ENCODE measurements at regions of chr2 and their contacts with region 1.

Region 1: DNA sequence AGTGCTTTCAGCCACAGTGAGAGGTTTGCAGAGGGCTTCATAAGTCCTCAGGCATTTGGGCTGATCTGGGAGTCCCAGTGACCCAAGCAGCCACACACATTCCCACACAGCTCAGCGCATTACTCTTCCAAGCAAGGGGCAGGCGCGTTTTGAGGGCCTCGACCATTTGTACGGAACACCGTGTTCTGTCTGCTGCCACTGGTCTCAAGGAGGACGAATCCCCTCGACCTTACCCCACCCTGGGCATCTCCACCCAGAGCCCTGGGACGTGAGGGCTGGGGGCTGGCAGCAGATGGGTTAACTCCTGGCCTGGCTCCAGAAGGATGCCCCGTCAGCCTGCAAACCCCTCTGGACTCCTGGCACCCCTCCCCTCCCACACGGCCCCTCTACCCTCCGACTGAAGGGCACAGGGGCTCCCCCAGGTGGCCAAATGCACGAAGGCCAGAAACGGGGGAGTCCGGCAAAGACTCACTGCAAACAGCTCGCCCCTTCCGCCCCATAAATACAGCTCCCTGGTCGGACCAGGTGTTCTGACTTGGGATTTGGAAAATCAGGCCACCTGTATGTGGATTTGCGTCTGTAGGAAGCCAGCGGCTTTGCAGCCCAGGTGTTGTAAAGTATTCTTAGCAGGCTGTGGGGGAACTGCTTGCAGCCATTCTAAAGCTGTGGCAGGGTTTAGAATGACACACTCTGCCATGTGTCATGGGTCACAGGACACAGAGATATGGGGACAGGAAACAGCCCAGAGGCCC is 33.6 kb upstream of the PTMA start:
- DNase-seq: peak; percentile 91
- H3K4me3 Mint-ChIP-seq: peak overlapping the region; percentile 34
- H3K27ac Mint-ChIP-seq: peak overlapping the region; percentile 75
- H3K4me1 Mint-ChIP-seq: peaks cover 19% of the 10 kb centered on the region
- H3K27me3 Mint-ChIP-seq: peaks cover 2% of the 10 kb centered on the region

Region 2: GRCh38 chr2:231648587-231649174 is 26.1 kb before region 1 on chr2:
- intact Hi-C with region 1: loop called (anchors 1 kb)
- DNase-seq: peak; percentile 91
- H3K4me3 Mint-ChIP-seq: no peak overlapping the region
- H3K27ac Mint-ChIP-seq: no peak overlapping the region
- H3K4me1 Mint-ChIP-seq: peaks cover 16% of the 10 kb centered on the region
- H3K27me3 Mint-ChIP-seq: no peaks in the 10 kb centered on the region

Region 3: DNA sequence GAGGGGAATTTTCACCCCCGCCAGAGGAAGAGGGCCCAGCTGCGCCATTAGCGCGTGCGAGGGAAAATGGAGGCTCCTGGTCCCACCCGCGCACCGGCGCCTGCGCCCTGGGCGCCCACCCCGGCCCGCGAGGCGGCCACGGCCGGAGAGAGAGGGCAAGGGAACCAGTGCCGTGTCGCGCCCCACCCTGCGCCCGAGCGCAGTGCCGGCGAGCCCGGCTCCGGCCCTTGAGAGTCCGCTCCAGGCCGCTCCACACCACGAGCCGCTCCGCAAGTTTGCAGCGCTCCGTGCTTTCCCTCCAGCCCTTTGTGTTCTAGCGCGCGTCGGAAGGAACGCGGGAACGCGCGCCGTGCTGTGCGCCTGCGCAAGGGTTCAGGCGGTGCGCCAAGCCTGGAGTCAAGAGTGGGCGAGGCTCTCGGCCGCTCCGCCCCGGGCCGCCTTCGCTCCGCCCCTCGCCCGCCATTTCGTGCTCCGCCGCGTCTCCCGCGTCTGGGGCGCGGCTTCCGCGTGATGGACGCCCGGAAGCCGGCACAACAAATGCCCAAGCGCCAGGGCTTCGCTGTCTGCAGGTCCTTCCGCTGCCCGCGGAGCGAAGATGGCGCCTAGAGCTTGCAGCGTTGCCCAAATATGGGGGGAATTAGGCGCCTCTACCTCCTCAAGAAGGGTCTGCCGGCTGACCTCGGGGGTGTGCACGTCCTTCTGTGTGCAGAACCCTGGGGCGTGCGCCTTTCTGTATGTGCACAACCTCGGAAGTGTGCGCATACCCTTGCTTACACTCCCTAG is 12.5 kb before region 1 on chr2:
- intact Hi-C with region 1: loop called (anchors 1 kb)
- DNase-seq: peak; percentile 100
- H3K4me3 Mint-ChIP-seq: peak overlapping the region; percentile 70
- H3K27ac Mint-ChIP-seq: peak overlapping the region; percentile 98
- H3K4me1 Mint-ChIP-seq: peaks cover 22% of the 10 kb centered on the region
- H3K27me3 Mint-ChIP-seq: no peaks in the 10 kb centered on the region

Region 4: DNA sequence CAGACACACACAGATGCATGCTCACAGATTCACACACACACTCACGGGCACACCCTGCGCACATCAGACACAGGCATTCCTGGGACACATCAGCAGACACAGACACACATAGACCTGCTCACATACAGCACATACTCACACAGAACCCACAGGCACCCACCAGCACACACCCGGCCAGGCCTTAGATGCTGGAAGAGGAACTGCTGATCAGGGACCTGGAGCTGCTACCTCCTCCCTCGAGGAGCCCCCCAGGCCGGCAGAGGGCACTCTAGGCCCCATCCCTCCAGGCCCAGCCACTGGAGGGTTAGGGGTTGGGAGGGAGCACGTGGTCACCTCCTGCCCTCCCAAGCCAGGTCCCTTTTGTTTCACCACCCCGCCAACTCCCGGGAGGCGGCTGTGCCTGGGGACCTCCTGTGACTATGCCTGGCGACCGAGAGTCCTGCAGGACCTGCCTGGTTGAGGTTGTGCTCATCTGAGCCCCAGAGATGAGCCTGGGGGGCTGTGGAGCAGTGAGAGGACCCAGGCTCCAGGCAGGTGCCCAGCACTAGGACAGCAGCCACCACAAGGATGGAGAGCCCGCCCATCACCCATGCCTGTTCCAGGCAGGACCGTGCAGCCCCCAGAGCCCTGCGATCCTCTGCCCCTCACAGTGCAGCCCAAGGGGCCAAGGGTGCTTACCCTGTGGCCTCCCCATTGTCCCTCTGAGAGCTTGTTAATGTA is 12.5 kb after region 1 on chr2:
- intact Hi-C with region 1: no loop called
- DNase-seq: peak; percentile 87
- H3K4me3 Mint-ChIP-seq: no peak overlapping the region
- H3K27ac Mint-ChIP-seq: no peak overlapping the region
- H3K4me1 Mint-ChIP-seq: peaks cover 5% of the 10 kb centered on the region
- H3K27me3 Mint-ChIP-seq: peaks cover 8% of the 10 kb centered on the region

Region 5: GRCh38 chr2:231713730-231714430 is 39.1 kb after region 1 on chr2:
- intact Hi-C with region 1: loop called (anchors 1 kb)
- DNase-seq: peak; percentile 96
- H3K4me3 Mint-ChIP-seq: peak overlapping the region; percentile 79
- H3K27ac Mint-ChIP-seq: peak overlapping the region; percentile 95
- H3K4me1 Mint-ChIP-seq: peaks cover 22% of the 10 kb centered on the region
- H3K27me3 Mint-ChIP-seq: no peaks in the 10 kb centered on the region

Region 6: GRCh38 chr2:231786177-231786916 is 111.6 kb after region 1 on chr2 and contains the start of gene COPS7B:
- intact Hi-C with region 1: loop called (anchors 1 kb)
- DNase-seq: peak; percentile 95
- H3K4me3 Mint-ChIP-seq: peak within 1 kb of the TSS; percentile 94
- H3K27ac Mint-ChIP-seq: peak within 1 kb of the TSS; percentile 87
- H3K4me1 Mint-ChIP-seq: peaks cover 61% of the 10 kb centered on the region
- H3K27me3 Mint-ChIP-seq: no peaks in the 10 kb centered on the region
- total RNA-seq, gene COPS7B: 66.7 and 67.6 TPM in 2 replicates

Measured in activated CD4-positive, alpha-beta T cell treated with anti-CD3 and anti-CD28 coated beads, Interleukin-2, amount 10 ng/mL, durations not matched to agents 24 days and 14 days (primary cell).